ENCODE measurements at regions of chr18 and their contacts with region 1.

Region 1: GRCh38 chr18:50356036-50356945 is 18.6 kb upstream of the SKA1 start:
- DNase-seq: no peak
- H3K4me3 ChIP-seq: no peak overlapping the region
- H3K4me3 Mint-ChIP-seq: no peak overlapping the region
- H3K27ac Mint-ChIP-seq: no peak overlapping the region
- H3K4me1 ChIP-seq: no peaks in the 10 kb centered on the region
- H3K4me1 Mint-ChIP-seq: no peaks in the 10 kb centered on the region
- H3K27me3 ChIP-seq: no peaks in the 10 kb centered on the region
- H3K27me3 Mint-ChIP-seq: no peaks in the 10 kb centered on the region
- CTCF ChIP-seq: no peak

Region 2: DNA sequence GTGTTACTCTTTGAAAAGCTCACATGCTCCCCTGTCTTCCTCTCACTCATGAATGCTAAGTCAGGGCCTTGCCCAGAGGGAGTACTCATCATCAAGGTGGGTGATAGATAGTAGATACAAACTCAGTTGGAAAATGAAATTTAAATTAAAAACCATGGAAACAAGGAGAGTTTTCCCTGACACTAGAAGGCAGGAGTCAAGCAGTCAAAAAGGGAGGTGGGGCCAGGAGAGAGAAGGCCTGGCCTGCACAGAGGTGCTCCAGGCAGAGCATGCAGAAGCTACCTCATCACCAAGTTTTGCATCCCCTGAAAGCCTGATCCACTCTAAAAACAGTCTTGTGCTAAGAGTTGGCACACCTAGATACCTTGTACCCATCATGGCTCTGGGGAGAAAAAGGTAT is 305.0 kb before region 1 on chr18:
- CTCF ChIA-PET with region 1: interaction called, 5 read pairs
- POLR2A ChIA-PET with region 1: no interaction called
- intact Hi-C with region 1: loop called (anchors 2 kb)
- DNase-seq: peak in 1 of 2 experiments; percentile 14
- H3K4me3 ChIP-seq: no peak overlapping the region
- H3K4me3 Mint-ChIP-seq: no peak overlapping the region
- H3K27ac Mint-ChIP-seq: no peak overlapping the region
- H3K4me1 ChIP-seq: no peaks in the 10 kb centered on the region
- H3K4me1 Mint-ChIP-seq: no peaks in the 10 kb centered on the region
- H3K27me3 ChIP-seq: no peaks in the 10 kb centered on the region
- H3K27me3 Mint-ChIP-seq: no peaks in the 10 kb centered on the region
- CTCF ChIP-seq: peak in 1 of 2 experiments; percentile 32

Region 3: DNA sequence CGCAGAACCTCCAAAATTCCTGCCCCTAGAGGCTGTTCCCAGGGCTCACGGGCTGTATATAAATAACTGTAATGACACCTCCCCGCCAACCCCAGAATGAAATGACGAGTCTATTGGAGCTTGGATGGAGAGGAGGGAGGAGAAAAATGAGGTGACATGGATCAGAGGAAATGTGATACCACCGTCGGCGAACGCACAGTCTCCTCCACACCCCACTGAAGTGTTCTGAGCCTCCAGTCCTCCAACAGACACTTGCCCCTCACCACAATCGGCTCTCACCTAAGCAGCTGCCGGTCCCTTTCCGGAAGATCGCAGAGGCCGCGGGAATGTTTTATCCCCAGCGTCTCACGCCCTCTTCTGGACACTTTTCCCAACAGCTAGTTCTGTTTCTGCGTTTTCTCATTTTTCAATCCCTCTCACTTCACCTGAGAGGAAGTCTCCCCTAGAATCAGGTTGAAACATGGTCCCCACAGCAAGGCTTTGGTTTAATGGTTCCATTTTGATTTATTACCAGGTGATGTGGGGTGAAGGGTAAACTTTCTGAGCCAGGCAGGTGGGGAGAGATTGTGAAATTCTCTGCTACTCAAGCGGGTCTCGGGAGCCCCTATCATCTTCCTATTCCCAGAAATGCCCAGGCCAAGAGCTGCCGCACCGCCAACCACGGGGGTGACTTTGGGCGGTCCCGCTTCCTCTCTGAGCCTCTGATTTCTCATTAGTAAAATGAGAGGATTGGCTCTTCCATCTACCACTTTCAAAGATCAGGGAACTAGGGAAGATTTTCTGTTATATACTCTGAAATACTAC is 152.3 kb before region 1 on chr18:
- CTCF ChIA-PET with region 1: no interaction called
- POLR2A ChIA-PET with region 1: no interaction called
- intact Hi-C with region 1: loop called (anchors 5 kb)
- DNase-seq: peak; percentile 48 to 61
- H3K4me3 ChIP-seq: no peak overlapping the region
- H3K4me3 Mint-ChIP-seq: peak overlapping the region; percentile 25
- H3K27ac Mint-ChIP-seq: no peak overlapping the region
- H3K4me1 ChIP-seq: no peaks in the 10 kb centered on the region
- H3K4me1 Mint-ChIP-seq: no peaks in the 10 kb centered on the region
- H3K27me3 ChIP-seq: no peaks in the 10 kb centered on the region
- H3K27me3 Mint-ChIP-seq: no peaks in the 10 kb centered on the region
- CTCF ChIP-seq: peak in 1 of 2 experiments; percentile 62

Region 4: DNA sequence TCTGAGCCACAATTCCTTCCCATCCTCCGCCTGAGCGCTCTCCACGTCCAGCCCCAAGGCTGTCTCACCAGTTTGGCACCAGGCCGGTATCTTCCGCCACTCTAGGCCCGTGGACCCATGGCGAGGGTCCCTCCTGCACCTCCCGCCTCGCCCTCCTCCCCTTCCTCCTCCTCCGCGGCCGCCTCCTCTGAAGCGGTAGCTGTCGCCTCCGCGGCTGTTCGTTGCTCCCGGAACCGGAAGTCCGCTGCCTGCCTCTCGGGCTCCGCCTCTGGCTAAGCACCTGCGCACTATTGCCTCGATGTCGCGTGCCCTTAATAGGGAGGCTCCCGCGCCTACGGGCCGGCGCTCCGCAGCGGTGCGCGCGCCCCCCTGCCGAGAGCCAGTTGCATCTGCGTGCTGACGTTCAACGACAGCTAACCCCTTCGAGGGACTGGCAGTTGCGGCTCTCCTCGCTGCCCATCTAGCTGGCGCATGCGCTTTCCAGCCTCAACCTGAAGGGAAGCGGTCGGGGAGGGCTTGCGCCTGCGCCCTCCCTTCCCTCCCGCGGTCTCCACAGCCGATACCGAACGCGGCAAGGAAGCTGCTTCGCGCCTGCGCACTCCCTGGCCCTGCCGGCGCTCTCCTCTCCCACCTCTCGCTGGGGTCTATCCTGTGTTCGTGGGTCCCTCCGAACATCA is 74.9 kb before region 1 on chr18 and contains the start of gene MBD1:
- CTCF ChIA-PET with region 1: interaction called, 11 read pairs
- POLR2A ChIA-PET with region 1: no interaction called
- intact Hi-C with region 1: no loop called
- DNase-seq: peak; percentile 88 to 91
- H3K4me3 ChIP-seq: peak within 1 kb of the TSS; percentile 56
- H3K4me3 Mint-ChIP-seq: peak within 1 kb of the TSS; percentile 86
- H3K27ac Mint-ChIP-seq: peak within 1 kb of the TSS; percentile 94
- H3K4me1 ChIP-seq: no peaks in the 10 kb centered on the region
- H3K4me1 Mint-ChIP-seq: peaks cover 12% of the 10 kb centered on the region
- H3K27me3 ChIP-seq: no peaks in the 10 kb centered on the region
- H3K27me3 Mint-ChIP-seq: no peaks in the 10 kb centered on the region
- CTCF ChIP-seq: no peak
- total RNA-seq, gene MBD1: 31.1 and 34.7 TPM in 2 replicates

Region 5: GRCh38 chr18:50287441-50288347 is 68.6 kb before region 1 on chr18 and contains the start of gene CXXC1:
- CTCF ChIA-PET with region 1: no interaction called
- POLR2A ChIA-PET with region 1: no interaction called
- intact Hi-C with region 1: loop called (anchors 1 kb)
- DNase-seq: peak; percentile 92 to 95
- H3K4me3 ChIP-seq: peak within 1 kb of the TSS; percentile 53
- H3K4me3 Mint-ChIP-seq: peak within 1 kb of the TSS; percentile 87
- H3K27ac Mint-ChIP-seq: peak within 1 kb of the TSS; percentile 84
- H3K4me1 ChIP-seq: no peaks in the 10 kb centered on the region
- H3K4me1 Mint-ChIP-seq: peaks cover 7% of the 10 kb centered on the region
- H3K27me3 ChIP-seq: no peaks in the 10 kb centered on the region
- H3K27me3 Mint-ChIP-seq: no peaks in the 10 kb centered on the region
- CTCF ChIP-seq: peak; percentile 26 to 38
- total RNA-seq, gene CXXC1: 37.7 and 41.5 TPM in 2 replicates

Region 6: DNA sequence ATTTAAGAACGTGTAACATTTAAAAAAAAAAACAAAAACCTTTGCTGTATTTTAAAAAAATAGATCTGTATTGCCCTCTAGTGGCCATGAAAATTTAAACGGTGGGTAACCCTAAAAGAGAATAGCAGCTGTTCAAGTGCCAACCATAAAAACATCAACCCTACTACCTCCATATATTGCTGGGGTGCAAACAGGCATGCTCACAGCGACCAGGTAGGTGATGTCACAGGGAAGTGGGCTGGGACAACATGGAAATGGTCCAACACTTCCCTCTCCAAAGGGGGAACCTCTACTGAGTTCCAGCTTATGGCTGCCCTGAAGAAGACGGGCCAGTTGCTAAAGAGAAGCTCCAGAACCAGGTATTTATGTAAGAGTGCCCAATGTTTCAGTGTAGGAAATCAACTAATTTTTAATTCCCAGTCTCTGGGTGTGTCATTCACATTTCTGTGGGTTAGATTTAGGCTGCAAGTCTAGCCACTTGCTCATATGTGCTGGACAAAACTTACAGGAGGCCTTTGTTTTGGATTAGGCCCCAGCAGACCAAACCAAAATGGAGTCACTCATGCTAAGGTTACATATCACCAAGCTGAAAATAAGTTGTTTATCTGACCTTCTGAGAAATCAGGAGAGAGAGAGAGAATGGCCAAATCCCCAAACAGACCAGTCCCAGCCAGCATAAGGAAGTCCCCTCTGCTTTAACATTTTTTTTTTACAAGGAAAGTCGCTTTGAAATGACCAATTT is 73.1 kb after region 1 on chr18:
- CTCF ChIA-PET with region 1: interaction called, 11 read pairs
- POLR2A ChIA-PET with region 1: no interaction called
- intact Hi-C with region 1: loop called (anchors 5 kb)
- DNase-seq: peak in 1 of 2 experiments; percentile 48
- H3K4me3 ChIP-seq: no peak overlapping the region
- H3K4me3 Mint-ChIP-seq: no peak overlapping the region
- H3K27ac Mint-ChIP-seq: no peak overlapping the region
- H3K4me1 ChIP-seq: no peaks in the 10 kb centered on the region
- H3K4me1 Mint-ChIP-seq: no peaks in the 10 kb centered on the region
- H3K27me3 ChIP-seq: no peaks in the 10 kb centered on the region
- H3K27me3 Mint-ChIP-seq: no peaks in the 10 kb centered on the region
- CTCF ChIP-seq: peak in 1 of 2 experiments; percentile 34

Region 7: DNA sequence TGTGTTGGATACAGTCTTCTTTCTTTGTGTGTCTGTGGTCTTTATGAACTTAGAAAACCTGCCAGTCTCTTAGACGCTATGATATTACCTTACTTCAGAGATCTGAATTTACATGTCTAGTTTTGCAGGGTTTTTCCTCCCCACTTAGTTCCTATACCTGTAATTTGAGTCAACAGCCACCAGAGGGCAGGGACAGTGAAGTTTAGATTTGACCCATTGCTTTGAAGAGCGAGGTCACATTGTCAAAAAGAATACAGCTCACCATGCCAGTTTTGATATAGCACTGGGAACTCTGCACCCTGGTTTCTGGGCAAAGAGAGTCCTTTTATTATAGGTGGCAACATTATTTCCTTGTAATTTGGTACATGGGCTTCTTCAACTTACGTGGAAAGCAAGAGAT is 305.9 kb after region 1 on chr18:
- CTCF ChIA-PET with region 1: no interaction called
- POLR2A ChIA-PET with region 1: no interaction called
- intact Hi-C with region 1: no loop called
- DNase-seq: peak in 1 of 2 experiments; percentile 2
- H3K4me3 ChIP-seq: no peak overlapping the region
- H3K4me3 Mint-ChIP-seq: no peak overlapping the region
- H3K27ac Mint-ChIP-seq: no peak overlapping the region
- H3K4me1 ChIP-seq: no peaks in the 10 kb centered on the region
- H3K4me1 Mint-ChIP-seq: no peaks in the 10 kb centered on the region
- H3K27me3 ChIP-seq: no peaks in the 10 kb centered on the region
- H3K27me3 Mint-ChIP-seq: no peaks in the 10 kb centered on the region
- CTCF ChIP-seq: peak; percentile 11 to 42